Spleen (tissue), 13 donors: ENCODE measurements at regions of chr13 and their contacts with region 1.

Region 1: GRCh38 chr13:74287724-74288169 is 153.5 kb upstream of the KLF12 start:
- DNase-seq: peak; percentile 89
- H3K4me3 ChIP-seq: peak overlapping the region in 4 of 8 donors; percentile 12 to 51 (median 18)
- H3K27ac ChIP-seq: peak overlapping the region in 5 of 8 donors; percentile 41 to 73 (median 57)
- H3K4me1 ChIP-seq: peaks cover 8 to 49% (median 35%) of the 10 kb centered on the region in 6 donors
- H3K27me3 ChIP-seq: no peaks in the 10 kb centered on the region
- CTCF ChIP-seq: no peak
- POLR2A ChIP-seq: no peak

Region 2: GRCh38 chr13:73835138-73835721 is 452.5 kb before region 1 on chr13:
- intact Hi-C with region 1: loop called (anchors 10 kb)
- DNase-seq: no peak
- H3K4me3 ChIP-seq: no peak overlapping the region
- H3K27ac ChIP-seq: no peak overlapping the region
- H3K4me1 ChIP-seq: peaks cover 0 to 40% (median 5%) of the 10 kb centered on the region in 6 donors
- H3K27me3 ChIP-seq: no peaks in the 10 kb centered on the region
- CTCF ChIP-seq: peak in 10 of 11 experiments; percentile 50 to 74 (median 66)
- POLR2A ChIP-seq: peak in 1 of 3 donors; percentile 8

Region 3: GRCh38 chr13:74133657-74134201 is 154.0 kb before region 1 on chr13:
- intact Hi-C with region 1: loop called (anchors 10 kb)
- DNase-seq: peak; percentile 96
- H3K4me3 ChIP-seq: peak overlapping the region; percentile 82 to 97 (median 88)
- H3K27ac ChIP-seq: peak overlapping the region; percentile 86 to 98 (median 94)
- H3K4me1 ChIP-seq: peaks cover 23 to 69% (median 49%) of the 10 kb centered on the region in 6 donors
- H3K27me3 ChIP-seq: peaks cover 0 to 24% (median 0%) of the 10 kb centered on the region in 7 donors
- CTCF ChIP-seq: peak in 1 of 11 experiments; percentile 6
- POLR2A ChIP-seq: peak; percentile 39 to 89 (median 71)

Region 4: GRCh38 chr13:74530011-74530410 is 242.3 kb after region 1 on chr13:
- intact Hi-C with region 1: no loop called
- DNase-seq: no peak
- H3K4me3 ChIP-seq: no peak overlapping the region
- H3K27ac ChIP-seq: no peak overlapping the region
- H3K4me1 ChIP-seq: no peaks in the 10 kb centered on the region
- H3K27me3 ChIP-seq: no peaks in the 10 kb centered on the region
- CTCF ChIP-seq: no peak
- POLR2A ChIP-seq: no peak